ENCODE measurements at regions of chr1 and their contacts with region 1.

Region 1: DNA sequence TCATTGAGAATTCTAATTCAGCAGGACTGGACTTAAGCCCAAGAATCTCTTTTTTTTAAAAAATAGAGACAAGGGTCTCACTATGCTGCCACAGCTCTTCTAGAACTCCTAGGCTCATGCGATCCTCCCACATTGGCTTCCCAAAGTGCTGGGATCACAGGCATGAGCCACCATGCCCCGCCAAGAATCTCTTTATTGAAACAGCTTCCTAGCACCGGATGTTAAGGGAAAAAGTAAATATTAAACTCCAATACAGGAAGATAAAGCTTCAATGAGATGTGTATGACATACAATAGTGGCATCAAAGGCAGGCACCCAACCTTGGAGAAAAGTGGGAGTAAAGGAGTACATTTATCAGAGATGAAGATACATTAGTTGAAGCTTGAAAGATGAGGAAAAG is 25.5 kb downstream of the PUM1 start:
- DNase-seq: no peak
- ATAC-seq: no peak
- H3K4me3 ChIP-seq: no peak overlapping the region
- H3K27ac ChIP-seq: no peak overlapping the region
- H3K4me1 ChIP-seq: peaks cover 10% of the 10 kb centered on the region
- H3K27me3 ChIP-seq: no peaks in the 10 kb centered on the region

Region 2: GRCh38 chr1:30977105-30977504 is 62.9 kb before region 1 on chr1:
- intact Hi-C with region 1: loop called in 1 of 4 experiments (anchors 10 kb)
- DNase-seq: no peak
- ATAC-seq: peak; percentile 9 to 22
- H3K4me3 ChIP-seq: no peak overlapping the region
- H3K27ac ChIP-seq: no peak overlapping the region
- H3K4me1 ChIP-seq: peaks cover 9% of the 10 kb centered on the region
- H3K27me3 ChIP-seq: no peaks in the 10 kb centered on the region

Region 3: DNA sequence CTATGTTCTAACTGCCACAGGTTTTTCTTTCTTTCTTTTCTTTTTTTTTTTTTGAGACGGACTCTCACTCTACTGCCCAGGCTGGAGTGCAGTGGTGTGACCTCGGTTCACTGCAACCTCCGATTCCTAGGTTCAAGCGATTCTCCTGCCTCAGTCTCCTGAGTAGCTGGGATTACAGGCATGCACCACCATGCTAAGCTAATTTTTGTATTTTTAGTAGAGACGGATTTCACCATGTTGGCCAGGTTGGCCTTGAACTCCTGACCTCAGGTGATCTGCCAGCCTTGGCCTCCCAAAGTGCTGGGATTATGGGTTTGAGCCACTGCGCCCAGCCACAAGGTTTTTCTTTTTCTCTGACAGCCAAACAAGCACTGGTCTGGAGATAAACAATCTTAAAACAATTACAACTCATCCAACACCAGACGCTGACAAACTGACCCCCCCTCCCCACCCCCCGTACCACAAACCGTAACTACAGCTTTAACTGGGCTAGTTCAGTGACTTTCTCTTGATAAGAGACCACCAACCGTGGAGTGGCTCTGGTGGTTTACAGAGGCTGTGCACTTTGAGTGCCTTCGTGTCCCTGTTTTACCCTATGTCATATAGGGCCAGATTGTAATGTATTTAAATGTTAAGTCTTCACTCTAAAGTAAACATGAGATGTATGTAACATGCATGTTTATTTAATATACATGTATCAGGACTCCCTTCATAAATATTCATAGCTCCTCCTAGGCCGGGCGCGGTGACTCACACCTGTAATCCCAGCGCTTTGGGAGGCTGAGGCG is 44.9 kb after region 1 on chr1:
- intact Hi-C with region 1: no loop called
- DNase-seq: no peak
- ATAC-seq: no peak
- H3K4me3 ChIP-seq: no peak overlapping the region
- H3K27ac ChIP-seq: no peak overlapping the region
- H3K4me1 ChIP-seq: no peaks in the 10 kb centered on the region
- H3K27me3 ChIP-seq: no peaks in the 10 kb centered on the region

Measured in right cardiac atrium (tissue), 5 donors.